ENCODE measurements at regions of chr10 and their contacts with region 1.

Region 1: GRCh38 chr10:86399879-86400704 is 33.5 kb upstream of the GRID1 start:
- DNase-seq: peak; percentile 83 to 96 (median 95)
- H3K4me3 ChIP-seq: peak overlapping the region; percentile 56 to 94 (median 76)
- H3K27ac ChIP-seq: peak overlapping the region; percentile 35 to 98 (median 89)
- H3K27me3 ChIP-seq: no peaks in the 10 kb centered on the region
- CTCF ChIP-seq: peak; percentile 84 to 100 (median 96)

Region 2: GRCh38 chr10:86439544-86439943 is 39.5 kb after region 1 on chr10:
- intact Hi-C with region 1: no loop called
- DNase-seq: peak in 6 of 10 donors; percentile 9 to 56 (median 43)
- H3K4me3 ChIP-seq: no peak overlapping the region
- H3K27ac ChIP-seq: peak overlapping the region in 39 of 59 donors; percentile 0 to 63 (median 30)
- H3K27me3 ChIP-seq: no peaks in the 10 kb centered on the region
- CTCF ChIP-seq: no peak

Region 3: GRCh38 chr10:86486856-86487255 is 86.8 kb after region 1 on chr10:
- intact Hi-C with region 1: loop called in 1 of 2 experiments (anchors 10 kb)
- DNase-seq: no peak
- H3K4me3 ChIP-seq: no peak overlapping the region
- H3K27ac ChIP-seq: peak overlapping the region in 45 of 59 donors; percentile 3 to 94 (median 61)
- H3K27me3 ChIP-seq: no peaks in the 10 kb centered on the region
- CTCF ChIP-seq: no peak

Region 4: GRCh38 chr10:86521678-86522509 is 121.8 kb after region 1 on chr10 and contains the start of gene WAPL:
- intact Hi-C with region 1: loop called (anchors 1 to 2 kb)
- DNase-seq: peak; percentile 87 to 98 (median 94)
- H3K4me3 ChIP-seq: peak within 1 kb of the TSS; percentile 68 to 100 (median 96)
- H3K27ac ChIP-seq: peak within 1 kb of the TSS; percentile 62 to 97 (median 91)
- H3K27me3 ChIP-seq: no peaks in the 10 kb centered on the region
- CTCF ChIP-seq: peak in 27 of 56 donors; percentile 4 to 61 (median 25)
- total RNA-seq, gene WAPL: 25.8 to 40.0 (median 32.6) TPM

Region 5: DNA sequence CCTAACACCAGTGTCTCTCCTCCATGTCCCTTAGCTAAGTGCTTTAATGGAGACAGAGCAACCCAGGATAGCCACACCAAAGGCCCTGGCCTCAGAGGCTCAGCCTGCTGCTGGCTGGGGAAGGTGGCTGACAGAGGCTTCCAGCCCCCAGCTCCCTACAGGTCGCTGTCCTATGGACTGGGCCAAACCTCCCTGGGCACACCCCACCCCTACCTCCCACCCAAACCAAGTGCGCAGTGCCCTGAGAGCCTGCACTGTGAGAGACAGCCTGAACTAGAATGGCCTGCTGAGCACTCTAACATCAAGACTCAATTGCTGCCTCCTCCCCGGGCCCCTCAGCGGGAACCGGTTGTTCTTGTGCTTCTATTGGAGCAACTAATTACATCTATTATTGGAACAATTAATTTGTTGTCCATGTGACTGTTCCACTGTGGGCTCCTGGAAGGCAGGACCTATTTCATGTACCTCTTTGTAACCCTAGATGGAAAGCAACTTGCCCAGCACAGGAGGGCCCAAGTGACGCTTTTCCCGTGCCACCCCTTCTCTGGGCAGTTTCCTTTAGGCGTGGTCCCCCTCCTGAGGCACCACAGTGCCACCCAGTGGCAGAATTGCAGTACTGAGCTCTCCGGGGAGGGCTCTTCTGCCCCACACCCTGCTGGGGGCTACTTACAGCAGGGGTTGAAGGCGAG is 185.1 kb after region 1 on chr10:
- intact Hi-C with region 1: loop called (anchors 1 kb)
- DNase-seq: peak; percentile 48 to 81 (median 66)
- H3K4me3 ChIP-seq: peak overlapping the region in 22 of 59 donors; percentile 1 to 52 (median 25)
- H3K27ac ChIP-seq: peak overlapping the region in 56 of 59 donors; percentile 3 to 89 (median 78)
- H3K27me3 ChIP-seq: no peaks in the 10 kb centered on the region
- CTCF ChIP-seq: peak; percentile 80 to 99 (median 98)

Region 6: GRCh38 chr10:86688398-86688921 is 288.4 kb after region 1 on chr10:
- intact Hi-C with region 1: loop called in 1 of 2 experiments (anchors 5 kb)
- DNase-seq: peak in 5 of 10 donors; percentile 48 to 70 (median 56)
- H3K4me3 ChIP-seq: no peak overlapping the region
- H3K27ac ChIP-seq: peak overlapping the region in 14 of 59 donors; percentile 7 to 58 (median 28)
- H3K27me3 ChIP-seq: no peaks in the 10 kb centered on the region
- CTCF ChIP-seq: peak; percentile 48 to 91 (median 82)

Measured in dorsolateral prefrontal cortex (tissue), 120 donors.